Activated naive CD4-positive, alpha-beta T cell treated with anti-CD3 and anti-CD28 coated beads, Interleukin-2, amount 10 ng/mL, durations not matched to agents 7 days and 5 days (primary cell): ENCODE measurements at regions of chr13 and their contacts with region 1.

Region 1: GRCh38 chr13:24727731-24728601 is 36.0 kb upstream of the RNF17 start:
- DNase-seq: peak; percentile 80
- H3K4me3 Mint-ChIP-seq: no peak overlapping the region
- H3K27ac Mint-ChIP-seq: no peak overlapping the region
- H3K4me1 Mint-ChIP-seq: peaks cover 9% of the 10 kb centered on the region
- H3K27me3 Mint-ChIP-seq: peaks cover 39% of the 10 kb centered on the region

Region 2: GRCh38 chr13:24605923-24606372 is 122.0 kb before region 1 on chr13:
- CTCF ChIA-PET with region 1: interaction called, 26 read pairs
- DNase-seq: no peak
- H3K4me3 Mint-ChIP-seq: no peak overlapping the region
- H3K27ac Mint-ChIP-seq: peak overlapping the region; percentile 13
- H3K4me1 Mint-ChIP-seq: peaks cover 5% of the 10 kb centered on the region
- H3K27me3 Mint-ChIP-seq: no peaks in the 10 kb centered on the region

Region 3: DNA sequence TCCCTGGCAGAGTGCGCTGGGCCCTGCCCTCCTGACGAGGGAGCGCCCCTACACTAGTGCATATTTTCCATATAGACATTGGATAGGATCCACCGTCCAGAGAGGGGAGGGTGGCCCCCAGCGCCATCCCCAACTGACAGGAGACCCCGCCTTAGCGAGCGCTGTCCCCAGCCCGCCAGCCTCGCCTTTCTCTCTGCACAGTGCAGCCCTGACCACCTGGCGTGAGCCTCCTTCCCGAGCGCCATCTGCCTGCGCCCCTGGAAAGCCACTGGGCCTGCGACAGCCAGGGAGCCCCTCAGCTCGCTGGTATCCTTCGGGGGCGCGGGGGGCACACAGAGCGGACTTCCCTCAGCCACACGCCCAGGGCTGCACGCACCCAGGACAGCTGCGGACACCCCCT is 89.9 kb before region 1 on chr13:
- CTCF ChIA-PET with region 1: no interaction called
- DNase-seq: no peak
- H3K4me3 Mint-ChIP-seq: no peak overlapping the region
- H3K27ac Mint-ChIP-seq: no peak overlapping the region
- H3K4me1 Mint-ChIP-seq: peaks cover 8% of the 10 kb centered on the region
- H3K27me3 Mint-ChIP-seq: peaks cover 13% of the 10 kb centered on the region

Region 4: GRCh38 chr13:24683838-24684599 is 43.9 kb before region 1 on chr13:
- CTCF ChIA-PET with region 1: interaction called, 20 read pairs
- DNase-seq: peak; percentile 72
- H3K4me3 Mint-ChIP-seq: no peak overlapping the region
- H3K27ac Mint-ChIP-seq: peak overlapping the region; percentile 50
- H3K4me1 Mint-ChIP-seq: peaks cover 34% of the 10 kb centered on the region
- H3K27me3 Mint-ChIP-seq: peaks cover 87% of the 10 kb centered on the region

Region 5: DNA sequence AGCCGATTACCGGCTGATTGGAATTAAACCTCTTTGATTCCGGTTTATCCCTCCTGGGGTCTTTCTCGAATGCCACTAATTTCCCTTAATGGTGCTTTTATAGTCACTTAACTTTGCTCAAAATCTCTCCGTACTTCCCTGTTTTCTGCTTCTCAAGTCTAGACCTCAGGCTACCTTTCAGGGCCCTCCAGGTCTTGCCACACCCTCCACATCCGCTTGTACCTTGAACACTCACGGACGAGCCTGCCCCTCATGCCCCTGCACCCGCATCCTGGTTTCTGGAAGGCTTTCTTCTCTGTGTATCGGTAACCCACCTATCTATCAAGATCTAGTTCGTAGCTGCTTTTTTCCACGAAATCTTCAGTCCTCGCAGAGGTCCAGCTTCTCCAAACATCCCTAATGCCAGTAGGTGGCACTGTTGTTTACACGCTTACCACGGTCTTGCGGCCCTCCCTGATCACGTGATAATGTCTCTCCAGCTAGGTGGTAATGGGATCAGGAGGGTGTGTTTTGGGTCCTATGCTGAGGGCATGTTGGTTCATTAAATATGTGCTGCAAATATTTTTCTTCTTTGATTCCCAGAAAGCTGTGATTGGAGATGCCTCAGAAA is 34.0 kb before region 1 on chr13:
- CTCF ChIA-PET with region 1: interaction called, 76 read pairs
- DNase-seq: peak; percentile 59
- H3K4me3 Mint-ChIP-seq: peak overlapping the region; percentile 43
- H3K27ac Mint-ChIP-seq: no peak overlapping the region
- H3K4me1 Mint-ChIP-seq: peaks cover 10% of the 10 kb centered on the region
- H3K27me3 Mint-ChIP-seq: peaks cover 67% of the 10 kb centered on the region

Region 6: DNA sequence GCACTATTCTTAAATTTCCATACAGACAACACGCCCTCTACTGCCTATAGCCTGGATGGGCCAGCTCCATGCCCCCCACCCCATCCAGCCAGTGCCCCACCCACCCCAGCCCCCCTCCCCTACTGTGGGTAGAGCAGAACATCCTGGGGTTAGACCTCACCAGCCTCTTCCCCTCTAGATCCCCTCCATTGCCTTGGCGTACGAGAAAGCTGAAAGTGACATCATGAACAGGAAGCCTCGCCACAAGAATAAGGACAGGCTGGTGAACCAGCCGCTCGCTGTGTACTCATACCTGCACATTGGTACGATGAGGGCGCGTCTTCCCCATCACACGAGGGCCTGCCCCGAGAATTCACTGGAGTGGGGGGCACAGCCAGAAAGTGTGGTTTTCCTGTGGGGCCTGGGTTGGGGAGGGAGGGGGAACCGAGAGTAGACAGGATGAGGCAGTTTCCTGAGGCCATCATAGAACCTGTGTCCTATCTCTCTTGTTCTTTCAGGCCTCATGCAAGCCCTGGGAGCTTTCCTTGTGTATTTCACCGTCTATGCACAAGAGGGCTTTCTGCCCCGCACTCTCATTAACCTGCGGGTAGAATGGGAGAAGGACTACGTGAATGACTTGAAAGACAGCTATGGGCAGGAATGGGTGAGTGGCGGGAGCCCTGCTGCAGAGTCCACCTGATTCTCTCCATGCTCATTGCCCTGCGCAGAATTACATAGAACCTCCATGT is 18.6 kb before region 1 on chr13:
- CTCF ChIA-PET with region 1: interaction called, 25 read pairs
- DNase-seq: peak; percentile 81
- H3K4me3 Mint-ChIP-seq: peak overlapping the region; percentile 41
- H3K27ac Mint-ChIP-seq: peak overlapping the region; percentile 85
- H3K4me1 Mint-ChIP-seq: peaks cover 29% of the 10 kb centered on the region
- H3K27me3 Mint-ChIP-seq: peaks cover 45% of the 10 kb centered on the region

Region 7: GRCh38 chr13:24716011-24716410 is 12.0 kb before region 1 on chr13:
- CTCF ChIA-PET with region 1: interaction called, 25 read pairs
- DNase-seq: no peak
- H3K4me3 Mint-ChIP-seq: no peak overlapping the region
- H3K27ac Mint-ChIP-seq: no peak overlapping the region
- H3K4me1 Mint-ChIP-seq: peaks cover 3% of the 10 kb centered on the region
- H3K27me3 Mint-ChIP-seq: peaks cover 52% of the 10 kb centered on the region

Region 8: DNA sequence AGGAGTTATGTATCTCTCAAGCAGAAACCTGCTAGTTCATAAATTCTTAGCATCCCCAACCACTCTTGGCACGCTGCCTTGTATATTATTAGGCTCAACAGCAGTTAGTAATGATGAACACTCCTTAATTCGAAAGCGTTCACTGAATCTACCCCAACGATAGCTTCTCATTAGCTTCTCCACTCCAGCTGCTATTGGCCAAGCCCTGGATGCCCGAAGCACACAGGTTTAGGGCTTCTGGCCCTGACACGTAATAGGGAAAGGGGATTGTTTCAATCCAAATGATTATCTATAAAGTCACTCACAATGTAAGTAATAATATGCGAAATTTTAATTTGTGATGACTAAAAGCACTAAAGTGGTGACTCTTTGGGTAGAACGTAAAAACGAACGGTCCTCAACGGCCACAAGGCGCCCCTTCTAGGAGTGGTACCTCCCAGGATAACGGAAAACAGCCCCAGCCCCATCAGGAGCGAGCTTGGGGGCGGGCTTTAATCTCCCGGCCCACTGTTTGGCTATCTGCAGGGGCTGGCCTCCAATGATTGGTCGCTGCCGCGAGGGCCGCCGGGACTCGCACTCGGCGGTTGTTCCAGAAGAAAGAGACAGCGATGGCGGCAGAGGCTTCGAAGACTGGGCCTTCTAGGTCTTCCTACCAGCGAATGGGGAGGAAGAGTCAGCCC is 35.8 kb after region 1 on chr13 and contains the start of gene RNF17:
- CTCF ChIA-PET with region 1: no interaction called
- DNase-seq: no peak
- H3K4me3 Mint-ChIP-seq: no peak within 1 kb of the TSS
- H3K27ac Mint-ChIP-seq: no peak within 1 kb of the TSS
- H3K4me1 Mint-ChIP-seq: no peaks in the 10 kb centered on the region
- H3K27me3 Mint-ChIP-seq: peaks cover 3% of the 10 kb centered on the region

Region 9: DNA sequence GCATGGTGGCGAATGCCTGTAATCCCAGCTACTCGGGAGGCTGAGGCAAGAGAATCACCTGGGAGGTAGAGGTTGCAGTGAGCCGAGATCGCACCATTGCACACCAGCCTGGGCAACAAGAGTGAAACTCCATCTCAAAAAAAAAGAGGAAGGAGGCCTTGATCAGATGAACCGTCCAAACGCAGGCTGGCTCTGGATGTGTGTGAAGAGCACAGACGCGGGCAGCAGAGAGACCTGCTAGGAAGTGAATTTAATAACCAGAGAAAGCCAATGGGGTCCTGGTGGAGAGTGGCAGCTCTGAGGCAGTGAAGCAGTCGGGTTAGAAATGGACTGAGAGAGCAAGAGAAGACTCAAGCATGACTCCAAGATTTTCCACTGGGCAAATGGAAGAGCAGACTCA is 172.5 kb after region 1 on chr13:
- CTCF ChIA-PET with region 1: no interaction called
- DNase-seq: no peak
- H3K4me3 Mint-ChIP-seq: no peak overlapping the region
- H3K27ac Mint-ChIP-seq: no peak overlapping the region
- H3K4me1 Mint-ChIP-seq: no peaks in the 10 kb centered on the region
- H3K27me3 Mint-ChIP-seq: no peaks in the 10 kb centered on the region